ENCODE measurements at regions of chr16 and their contacts with region 1.

Region 1: DNA sequence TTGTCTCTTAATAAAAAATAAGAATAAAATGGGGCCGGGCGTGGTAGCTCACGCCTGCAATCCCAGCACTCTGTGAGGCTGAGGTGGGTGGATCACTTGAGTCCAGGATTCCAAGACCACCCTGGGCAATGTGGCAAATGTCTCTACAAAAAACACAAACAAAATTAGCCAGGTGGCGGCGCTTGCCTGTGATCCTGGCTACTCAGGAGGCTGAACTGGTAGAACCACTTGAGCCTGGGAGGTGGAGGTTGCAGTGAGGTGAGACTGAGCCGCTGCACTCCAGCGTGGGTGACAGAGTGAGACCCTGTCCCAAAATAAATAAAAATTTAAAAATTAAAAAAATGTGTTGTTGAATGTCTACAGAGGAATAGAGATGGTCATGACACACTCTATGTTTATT is 2.9 kb upstream of the DEF8 start:
- DNase-seq: no peak
- H3K4me3 Mint-ChIP-seq: no peak overlapping the region
- H3K27ac Mint-ChIP-seq: no peak overlapping the region
- H3K4me1 Mint-ChIP-seq: peaks cover 7% of the 10 kb centered on the region
- H3K27me3 Mint-ChIP-seq: peaks cover 35% of the 10 kb centered on the region

Region 2: DNA sequence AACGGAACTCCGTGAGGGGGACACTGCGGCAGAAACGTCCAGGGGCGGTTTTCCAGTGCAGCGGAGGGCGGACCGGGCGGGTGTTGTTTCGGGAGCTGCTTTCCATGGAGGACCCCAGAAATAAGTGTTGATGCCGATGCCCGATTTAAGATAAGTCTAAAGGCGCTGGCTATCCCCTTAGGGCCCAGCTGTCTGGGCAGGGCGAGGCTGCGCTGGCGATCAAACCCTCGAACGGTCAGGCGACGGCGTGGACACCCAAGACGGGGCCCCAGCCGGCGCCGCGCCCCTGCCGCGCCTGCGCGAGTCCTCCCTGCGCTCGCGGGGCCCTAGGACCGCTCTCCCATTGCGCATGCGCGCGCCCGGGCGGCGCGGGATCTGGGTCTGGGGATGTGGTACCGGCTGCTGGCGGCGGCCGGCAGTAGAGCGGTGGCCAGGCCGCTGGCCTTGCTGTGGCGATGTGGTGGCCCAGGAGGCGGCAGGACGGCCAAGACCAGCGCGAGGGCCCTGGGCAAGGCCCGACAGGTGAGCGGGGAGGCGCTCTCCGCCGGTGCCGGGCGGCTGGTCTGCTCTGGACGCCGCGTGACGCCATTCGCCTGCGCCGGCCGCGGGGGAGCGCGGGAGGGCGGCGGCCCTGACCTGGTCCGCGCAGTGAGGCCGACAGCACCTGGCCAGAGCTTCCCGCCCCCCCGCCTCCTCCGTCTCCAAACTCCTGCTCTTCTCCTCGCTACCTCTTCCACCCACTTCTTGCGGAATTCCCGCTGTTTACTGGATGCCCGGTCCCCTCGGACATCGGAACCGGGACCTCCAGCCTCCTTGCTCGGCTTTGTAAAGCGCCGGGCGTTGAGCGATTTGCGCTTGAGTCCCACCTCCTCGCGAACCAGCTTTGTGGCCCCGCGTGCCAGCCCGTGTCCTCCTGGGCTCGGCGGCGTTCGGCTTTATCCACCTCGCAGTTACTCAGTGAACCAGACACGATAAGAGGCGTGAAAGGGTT is 26.9 kb after region 1 on chr16:
- intact Hi-C with region 1: loop called (anchors 2 kb)
- DNase-seq: peak; percentile 98
- H3K4me3 Mint-ChIP-seq: peak overlapping the region; percentile 100
- H3K27ac Mint-ChIP-seq: peak overlapping the region; percentile 97
- H3K4me1 Mint-ChIP-seq: peaks cover 18% of the 10 kb centered on the region
- H3K27me3 Mint-ChIP-seq: peaks cover 2% of the 10 kb centered on the region